ENCODE measurements at regions of chr1 and their contacts with region 1.

Region 1: GRCh38 chr1:156625436-156626078 is 6.3 kb downstream of the HAPLN2 start:
- H3K4me3 Mint-ChIP-seq: peak overlapping the region; percentile 24
- H3K27ac Mint-ChIP-seq: no peak overlapping the region
- H3K4me1 Mint-ChIP-seq: peaks cover 15% of the 10 kb centered on the region
- H3K27me3 Mint-ChIP-seq: peaks cover 88% of the 10 kb centered on the region

Region 2: GRCh38 chr1:156601122-156601830 is 24.3 kb before region 1 on chr1 and contains the start of gene GPATCH4:
- intact Hi-C with region 1: no loop called
- H3K4me3 Mint-ChIP-seq: peak within 1 kb of the TSS; percentile 98
- H3K27ac Mint-ChIP-seq: peak within 1 kb of the TSS; percentile 87
- H3K4me1 Mint-ChIP-seq: peaks cover 28% of the 10 kb centered on the region
- H3K27me3 Mint-ChIP-seq: no peaks in the 10 kb centered on the region

Region 3: GRCh38 chr1:156677616-156678596 is 52.3 kb after region 1 on chr1:
- intact Hi-C with region 1: loop called (anchors 1 kb)
- H3K4me3 Mint-ChIP-seq: no peak overlapping the region
- H3K27ac Mint-ChIP-seq: no peak overlapping the region
- H3K4me1 Mint-ChIP-seq: peaks cover 22% of the 10 kb centered on the region
- H3K27me3 Mint-ChIP-seq: peaks cover 96% of the 10 kb centered on the region